ENCODE measurements at regions of chr12 and their contacts with region 1.

Region 1: DNA sequence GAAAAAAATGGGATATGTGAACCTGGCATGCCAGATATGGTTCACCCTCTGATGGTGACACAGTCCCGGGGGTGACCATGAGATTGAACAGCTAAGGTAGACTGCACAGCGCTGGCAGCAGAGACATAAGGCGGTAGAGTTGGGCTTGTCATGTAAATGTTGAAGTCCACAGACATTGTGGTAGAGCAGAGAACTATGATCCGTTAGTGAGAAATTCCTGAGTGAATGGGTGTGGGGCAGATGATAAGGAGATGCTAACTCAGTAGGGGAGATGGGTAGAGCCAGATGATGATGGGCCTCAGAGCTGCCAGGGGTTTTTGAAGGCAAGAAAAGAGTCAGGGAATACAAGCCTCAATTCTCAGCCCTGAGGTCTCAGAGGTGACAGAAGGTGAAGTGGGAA is 51.1 kb upstream of the DNM1L start:
- DNase-seq: no peak
- ATAC-seq: no peak
- H3K4me3 ChIP-seq: no peak overlapping the region
- H3K4me3 Mint-ChIP-seq: no peak overlapping the region
- H3K27ac ChIP-seq: no peak overlapping the region
- H3K27ac Mint-ChIP-seq: no peak overlapping the region
- H3K4me1 ChIP-seq: peaks cover 0 to 2% of the 10 kb centered on the region in 2 experiments
- H3K4me1 Mint-ChIP-seq: no peaks in the 10 kb centered on the region
- H3K27me3 ChIP-seq: no peaks in the 10 kb centered on the region
- H3K27me3 Mint-ChIP-seq: peaks cover 0 to 3% of the 10 kb centered on the region in 2 donors

Region 2: GRCh38 chr12:32522331-32523221 is 105.4 kb before region 1 on chr12:
- CTCF ChIA-PET with region 1: no interaction called
- POLR2A ChIA-PET with region 1: no interaction called
- DNase-seq: no peak
- ATAC-seq: no peak
- H3K4me3 ChIP-seq: no peak overlapping the region
- H3K4me3 Mint-ChIP-seq: no peak overlapping the region
- H3K27ac ChIP-seq: no peak overlapping the region
- H3K27ac Mint-ChIP-seq: no peak overlapping the region
- H3K4me1 ChIP-seq: peaks cover 0 to 8% of the 10 kb centered on the region in 2 experiments
- H3K4me1 Mint-ChIP-seq: peaks cover 0 to 9% (median 9%) of the 10 kb centered on the region in 3 donors
- H3K27me3 ChIP-seq: peaks cover 0 to 4% of the 10 kb centered on the region in 2 experiments
- H3K27me3 Mint-ChIP-seq: peaks cover 0 to 2% of the 10 kb centered on the region in 2 donors

Region 3: DNA sequence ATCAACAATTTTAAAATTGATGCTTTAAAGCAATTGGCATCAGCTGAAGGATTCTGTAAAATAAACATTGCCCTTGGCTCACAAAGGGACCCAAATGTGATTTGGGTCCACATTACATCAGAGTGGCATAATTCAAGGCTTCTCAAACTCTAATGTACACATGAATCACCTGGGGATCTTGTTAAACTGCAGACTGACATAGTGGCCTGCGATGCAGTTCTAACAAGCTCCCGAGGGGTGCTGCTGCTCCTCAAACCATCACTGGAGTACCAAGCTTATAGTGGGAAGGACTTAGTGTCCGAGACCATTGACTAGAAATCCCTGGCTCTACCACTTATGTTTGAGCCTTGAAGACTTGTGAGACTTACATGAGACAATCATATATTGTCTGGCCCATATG is 19.3 kb after region 1 on chr12:
- CTCF ChIA-PET with region 1: interaction called in 1 of 2 experiments, 11 read pairs
- POLR2A ChIA-PET with region 1: no interaction called
- DNase-seq: no peak
- ATAC-seq: no peak
- H3K4me3 ChIP-seq: no peak overlapping the region
- H3K4me3 Mint-ChIP-seq: no peak overlapping the region
- H3K27ac ChIP-seq: no peak overlapping the region
- H3K27ac Mint-ChIP-seq: no peak overlapping the region
- H3K4me1 ChIP-seq: no peaks in the 10 kb centered on the region
- H3K4me1 Mint-ChIP-seq: no peaks in the 10 kb centered on the region
- H3K27me3 ChIP-seq: no peaks in the 10 kb centered on the region
- H3K27me3 Mint-ChIP-seq: peaks cover 0 to 4% of the 10 kb centered on the region in 2 donors

Region 4: DNA sequence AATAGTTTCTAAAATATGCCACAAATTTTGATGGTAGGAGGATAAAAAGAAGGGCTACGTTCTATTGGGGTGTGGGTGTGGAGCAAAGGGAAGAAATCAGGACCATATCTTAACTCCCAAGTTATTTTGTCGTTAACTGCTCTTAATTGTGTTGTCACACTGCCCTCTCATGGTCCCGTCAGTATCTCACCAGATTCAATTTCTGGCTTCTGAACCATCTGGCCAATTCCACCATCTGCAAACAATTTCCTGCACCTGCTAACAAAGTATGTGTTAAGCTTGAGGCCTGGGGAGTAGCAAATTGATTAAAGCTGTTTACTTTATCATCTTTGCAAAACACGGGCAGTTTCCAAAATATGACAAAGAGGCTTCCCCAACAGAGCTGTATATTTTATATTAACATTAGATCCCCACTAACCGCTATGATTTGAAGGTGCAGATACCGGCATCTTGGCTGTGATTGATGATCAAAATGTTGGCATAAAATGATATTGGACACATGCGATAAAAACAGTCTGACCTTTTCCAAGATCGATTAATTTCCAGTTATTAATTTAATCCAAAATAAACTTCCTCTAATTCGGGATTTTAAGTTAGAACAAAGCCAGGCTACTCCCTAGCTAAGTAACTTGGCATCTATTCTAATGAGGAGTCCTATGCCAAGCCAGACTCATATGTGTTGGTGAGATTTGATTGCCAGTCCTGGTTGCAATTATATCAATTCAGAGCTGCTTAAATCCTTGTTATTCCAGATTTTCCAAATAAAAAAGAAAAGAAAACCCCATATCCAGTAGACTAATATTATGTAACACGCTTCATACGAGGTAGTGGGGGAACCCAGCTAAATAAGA is 44.2 kb after region 1 on chr12:
- CTCF ChIA-PET with region 1: no interaction called
- POLR2A ChIA-PET with region 1: interaction called in 1 of 2 experiments, 20 read pairs
- DNase-seq: peak in 1 of 35 experiments; percentile 34
- ATAC-seq: no peak
- H3K4me3 ChIP-seq: no peak overlapping the region
- H3K4me3 Mint-ChIP-seq: no peak overlapping the region
- H3K27ac ChIP-seq: no peak overlapping the region
- H3K27ac Mint-ChIP-seq: no peak overlapping the region
- H3K4me1 ChIP-seq: no peaks in the 10 kb centered on the region
- H3K4me1 Mint-ChIP-seq: no peaks in the 10 kb centered on the region
- H3K27me3 ChIP-seq: peaks cover 0 to 9% of the 10 kb centered on the region in 2 experiments
- H3K27me3 Mint-ChIP-seq: no peaks in the 10 kb centered on the region